ENCODE measurements at regions of chr3 and their contacts with region 1.

Region 1: DNA sequence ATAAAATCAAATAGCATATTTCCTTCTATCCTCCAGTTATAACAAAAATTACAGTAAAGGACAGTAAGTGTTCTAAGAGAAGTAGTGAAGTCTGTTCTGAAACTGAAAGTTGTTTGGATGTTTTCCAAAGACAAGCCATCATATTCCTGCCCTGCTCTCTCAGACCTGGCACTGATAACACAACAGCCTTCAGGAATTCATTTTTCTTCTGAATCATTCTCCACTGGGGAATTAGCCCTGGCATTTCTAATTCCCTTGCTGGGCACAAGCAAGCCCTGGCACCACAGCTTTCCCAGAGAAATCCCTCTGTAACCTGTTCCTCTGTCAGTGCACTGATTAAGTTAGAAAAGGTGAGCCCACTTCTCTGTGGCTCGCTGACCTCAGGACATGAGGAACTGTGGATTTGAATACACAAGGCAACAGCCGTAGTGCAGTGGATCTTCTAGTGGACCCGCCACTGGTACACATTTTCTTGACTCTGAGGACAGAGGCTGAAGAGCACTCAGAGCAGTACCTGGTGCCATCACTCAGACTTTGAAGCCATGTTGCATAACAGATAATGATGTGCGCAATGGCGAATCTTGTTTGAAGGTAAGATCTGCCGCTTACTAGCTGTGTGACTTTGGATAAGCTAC is 61.6 kb downstream of the WWTR1 start:
- DNase-seq: no peak
- H3K4me3 ChIP-seq: no peak overlapping the region
- H3K27ac ChIP-seq: no peak overlapping the region
- H3K4me1 ChIP-seq: peaks cover 13% of the 10 kb centered on the region
- H3K27me3 ChIP-seq: no peaks in the 10 kb centered on the region
- CTCF ChIP-seq: no peak
- EP300 ChIP-seq: no peak
- POLR2A ChIP-seq: no peak

Region 2: GRCh38 chr3:149536429-149536828 is 59.8 kb before region 1 on chr3:
- intact Hi-C with region 1: loop called in 1 of 4 experiments (anchors 10 kb)
- DNase-seq: peak; percentile 55 to 70 (median 59)
- H3K4me3 ChIP-seq: no peak overlapping the region
- H3K27ac ChIP-seq: peak overlapping the region; percentile 21 to 73
- H3K4me1 ChIP-seq: peaks cover 30% of the 10 kb centered on the region
- H3K27me3 ChIP-seq: no peaks in the 10 kb centered on the region
- CTCF ChIP-seq: no peak
- EP300 ChIP-seq: no peak
- POLR2A ChIP-seq: no peak

Measured in ovary (tissue), 10 donors.